ENCODE measurements at regions of chr16 and their contacts with region 1.

Region 1: GRCh38 chr16:57591086-57591869 is 37.2 kb upstream of the ADGRG1 start:
- DNase-seq: no peak
- H3K4me3 ChIP-seq: no peak overlapping the region
- H3K27ac ChIP-seq: no peak overlapping the region
- H3K4me1 ChIP-seq: peaks cover 5 to 10% (median 8%) of the 10 kb centered on the region in 4 donors
- H3K27me3 ChIP-seq: peaks cover 0 to 42% (median 0%) of the 10 kb centered on the region in 4 donors
- CTCF ChIP-seq: peak; percentile 70 to 81 (median 78)
- EP300 ChIP-seq: no peak
- POLR2A ChIP-seq: no peak

Region 2: GRCh38 chr16:57648590-57649442 is 57.5 kb after region 1 on chr16:
- intact Hi-C with region 1: loop called (anchors 5 kb)
- DNase-seq: no peak
- H3K4me3 ChIP-seq: no peak overlapping the region
- H3K27ac ChIP-seq: peak overlapping the region in 1 of 4 donors; percentile 59
- H3K4me1 ChIP-seq: peaks cover 17 to 34% (median 25%) of the 10 kb centered on the region in 4 donors
- H3K27me3 ChIP-seq: peaks cover 0 to 68% (median 0%) of the 10 kb centered on the region in 4 donors
- CTCF ChIP-seq: peak in 2 of 3 experiments; percentile 93 to 97
- EP300 ChIP-seq: no peak
- POLR2A ChIP-seq: no peak

Region 3: GRCh38 chr16:57871456-57871855 is 280.2 kb after region 1 on chr16:
- intact Hi-C with region 1: loop called (anchors 10 kb)
- DNase-seq: no peak
- H3K4me3 ChIP-seq: no peak overlapping the region
- H3K27ac ChIP-seq: no peak overlapping the region
- H3K4me1 ChIP-seq: no peaks in the 10 kb centered on the region
- H3K27me3 ChIP-seq: peaks cover 0 to 25% (median 0%) of the 10 kb centered on the region in 4 donors
- CTCF ChIP-seq: no peak
- EP300 ChIP-seq: no peak
- POLR2A ChIP-seq: no peak